CD14-positive monocyte (primary cell): ENCODE measurements at regions of chr15 and their contacts with region 1.

Region 1: GRCh38 chr15:25850154-25851111 is 12.7 kb downstream of the ATP10A start:
- DNase-seq: peak; percentile 94 to 96 (median 95)
- H3K4me3 ChIP-seq: peak overlapping the region; percentile 34 to 70 (median 49)
- H3K4me3 Mint-ChIP-seq: peak overlapping the region; percentile 81 to 91
- H3K27ac ChIP-seq: peak overlapping the region; percentile 95 to 97
- H3K27ac Mint-ChIP-seq: peak overlapping the region; percentile 93 to 99 (median 99)
- H3K4me1 ChIP-seq: peaks cover 47 to 50% of the 10 kb centered on the region in 2 donors
- H3K4me1 Mint-ChIP-seq: peaks cover 56% of the 10 kb centered on the region
- H3K27me3 ChIP-seq: no peaks in the 10 kb centered on the region
- H3K27me3 Mint-ChIP-seq: peaks cover 0 to 6% (median 0%) of the 10 kb centered on the region in 3 donors
- CTCF ChIP-seq: no peak

Region 2: GRCh38 chr15:25790000-25790660 is 60.3 kb before region 1 on chr15:
- intact Hi-C with region 1: loop called (anchors 5 to 10 kb)
- DNase-seq: peak; percentile 42 to 49 (median 48)
- H3K4me3 ChIP-seq: no peak overlapping the region
- H3K4me3 Mint-ChIP-seq: peak overlapping the region in 1 of 2 donors; percentile 27
- H3K27ac ChIP-seq: peak overlapping the region in 1 of 2 donors; percentile 24
- H3K27ac Mint-ChIP-seq: peak overlapping the region in 4 of 7 donors; percentile 9 to 79 (median 31)
- H3K4me1 ChIP-seq: peaks cover 61 to 88% of the 10 kb centered on the region in 2 donors
- H3K4me1 Mint-ChIP-seq: peaks cover 86% of the 10 kb centered on the region
- H3K27me3 ChIP-seq: no peaks in the 10 kb centered on the region
- H3K27me3 Mint-ChIP-seq: peaks cover 0 to 5% (median 4%) of the 10 kb centered on the region in 3 donors
- CTCF ChIP-seq: no peak